HCT116 (cell line): ENCODE measurements at regions of chr18 and their contacts with region 1.

Region 1: GRCh38 chr18:50356036-50356945 is 18.6 kb upstream of the SKA1 start:
- DNase-seq: peak; percentile 28
- ATAC-seq: peak; percentile 83
- H3K4me3 ChIP-seq: no peak overlapping the region
- H3K27ac ChIP-seq: peak overlapping the region; percentile 29
- H3K4me1 ChIP-seq: peaks cover 14 to 15% of the 10 kb centered on the region in 2 experiments
- H3K27me3 ChIP-seq: no peaks in the 10 kb centered on the region
- CTCF ChIP-seq: peak in 2 of 3 experiments; percentile 35 to 36; a peak in 2 of 6 replicates
- POLR2A ChIP-seq: no peak
- RAD21 ChIP-seq: no peak; the same call in 1 of the 2 replicates

Region 2: DNA sequence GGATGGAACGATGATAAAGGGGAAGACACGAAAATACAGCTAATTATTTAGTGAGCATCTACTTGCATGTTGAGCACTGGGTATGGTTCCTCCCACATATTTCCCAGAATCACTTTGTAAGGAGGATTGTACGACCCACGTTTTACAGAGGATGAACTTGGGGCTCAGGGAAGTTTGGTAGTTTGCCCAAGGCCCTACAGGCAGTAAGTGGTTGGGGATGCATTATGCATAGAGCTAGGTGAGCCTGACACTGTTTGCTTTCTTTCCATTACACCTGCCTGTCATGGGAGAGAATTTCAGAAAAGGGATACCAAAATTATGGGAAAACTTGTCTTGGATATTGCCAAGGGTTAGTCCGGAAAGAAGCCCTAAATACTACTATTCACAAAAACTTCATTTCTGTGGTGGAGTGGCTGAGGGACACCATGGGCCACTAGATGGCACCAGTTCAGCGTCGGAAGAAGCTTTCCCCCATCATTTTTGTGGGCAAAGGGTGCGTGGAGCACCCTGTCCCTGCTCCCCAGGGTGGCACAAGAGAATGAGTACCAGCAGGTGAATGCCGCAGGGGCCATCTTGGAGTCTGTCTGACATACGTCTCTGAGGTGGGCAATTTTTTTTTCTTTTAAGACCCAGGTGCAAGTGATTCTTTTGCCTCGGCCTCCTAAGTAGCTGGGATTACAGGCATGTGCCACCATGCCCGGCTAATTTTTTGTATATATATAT is 845.7 kb before region 1 on chr18:
- CTCF ChIA-PET with region 1: no interaction called
- POLR2A ChIA-PET with region 1: no interaction called
- RAD21 ChIA-PET with region 1: no interaction called
- intact Hi-C with region 1: loop called (anchors 10 kb)
- DNase-seq: peak; percentile 73
- ATAC-seq: peak; percentile 97
- H3K4me3 ChIP-seq: no peak overlapping the region
- H3K27ac ChIP-seq: no peak overlapping the region
- H3K4me1 ChIP-seq: no peaks in the 10 kb centered on the region
- H3K27me3 ChIP-seq: no peaks in the 10 kb centered on the region
- CTCF ChIP-seq: peak; percentile 87 to 93 (median 88)
- POLR2A ChIP-seq: no peak
- RAD21 ChIP-seq: peak; percentile 97

Region 3: GRCh38 chr18:49886891-49887764 is 469.2 kb before region 1 on chr18:
- CTCF ChIA-PET with region 1: no interaction called
- POLR2A ChIA-PET with region 1: no interaction called
- RAD21 ChIA-PET with region 1: no interaction called
- intact Hi-C with region 1: loop called (anchors 10 kb)
- DNase-seq: peak; percentile 12
- ATAC-seq: peak; percentile 75
- H3K4me3 ChIP-seq: no peak overlapping the region
- H3K27ac ChIP-seq: no peak overlapping the region
- H3K4me1 ChIP-seq: peaks cover 9 to 11% of the 10 kb centered on the region in 2 experiments
- H3K27me3 ChIP-seq: no peaks in the 10 kb centered on the region
- CTCF ChIP-seq: peak in 2 of 3 experiments; percentile 44 to 53; a peak in 4 of 6 replicates
- POLR2A ChIP-seq: no peak
- RAD21 ChIP-seq: peak; percentile 21; the same call in 1 of the 2 replicates

Region 4: DNA sequence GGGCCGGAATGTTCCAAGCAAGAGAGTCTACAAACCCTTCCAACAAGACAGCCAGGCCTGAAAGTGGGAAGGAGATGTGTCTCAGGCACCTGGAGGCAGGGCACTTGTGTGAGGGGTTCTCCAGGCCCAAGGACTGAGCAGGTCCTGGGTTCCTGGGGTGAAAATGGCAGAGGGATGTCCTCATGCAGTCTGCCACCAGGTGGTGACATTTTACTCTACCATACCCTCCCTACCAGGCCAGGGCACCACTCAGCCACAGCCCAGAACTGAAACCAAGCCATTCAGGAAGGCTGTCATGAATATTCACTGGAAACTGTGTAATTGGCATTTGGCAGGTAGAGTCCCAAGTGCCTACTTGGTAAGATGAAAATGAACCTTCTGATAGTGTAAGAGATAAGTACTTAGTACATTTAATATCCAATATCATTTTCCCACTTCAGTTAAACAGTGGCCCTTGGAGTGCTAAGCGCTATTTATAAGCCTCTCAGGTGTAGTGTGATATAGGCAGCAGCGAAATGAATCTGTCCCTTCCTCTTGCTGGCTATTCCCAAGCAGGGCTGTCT is 346.4 kb before region 1 on chr18:
- CTCF ChIA-PET with region 1: interaction called, 3 read pairs
- POLR2A ChIA-PET with region 1: no interaction called
- RAD21 ChIA-PET with region 1: no interaction called
- intact Hi-C with region 1: loop called (anchors 1 kb)
- DNase-seq: peak; percentile 52
- ATAC-seq: peak; percentile 100
- H3K4me3 ChIP-seq: no peak overlapping the region
- H3K27ac ChIP-seq: no peak overlapping the region
- H3K4me1 ChIP-seq: peaks cover 0 to 20% of the 10 kb centered on the region in 2 experiments; a peak in 1 of 4 replicates
- H3K27me3 ChIP-seq: no peaks in the 10 kb centered on the region
- CTCF ChIP-seq: peak; percentile 71 to 77 (median 76)
- POLR2A ChIP-seq: no peak
- RAD21 ChIP-seq: peak; percentile 81

Region 5: GRCh38 chr18:50194631-50195532 is 161.4 kb before region 1 on chr18 and contains the start of gene MYO5B:
- CTCF ChIA-PET with region 1: interaction called, 10 read pairs
- POLR2A ChIA-PET with region 1: no interaction called
- RAD21 ChIA-PET with region 1: no interaction called
- intact Hi-C with region 1: no loop called
- DNase-seq: peak; percentile 42
- ATAC-seq: peak; percentile 94
- H3K4me3 ChIP-seq: peak within 1 kb of the TSS; percentile 65 to 71
- H3K27ac ChIP-seq: peak within 1 kb of the TSS; percentile 55; the same call in 1 of the 2 replicates
- H3K4me1 ChIP-seq: peaks cover 6 to 21% of the 10 kb centered on the region in 2 experiments; a peak in 1 of 4 replicates
- H3K27me3 ChIP-seq: no peaks in the 10 kb centered on the region
- CTCF ChIP-seq: peak in 2 of 3 experiments; percentile 32 to 45; a peak in 3 of 6 replicates
- POLR2A ChIP-seq: no peak
- RAD21 ChIP-seq: peak; percentile 50
- total RNA-seq, gene MYO5B: 32.1 TPM

Region 6: GRCh38 chr18:50218432-50219197 is 137.7 kb before region 1 on chr18:
- CTCF ChIA-PET with region 1: interaction called, 80 read pairs
- POLR2A ChIA-PET with region 1: interaction called, 7 read pairs
- RAD21 ChIA-PET with region 1: interaction called, 5 to 12 read pairs
- intact Hi-C with region 1: loop called (anchors 1 kb)
- DNase-seq: peak; percentile 33
- ATAC-seq: peak; percentile 97
- H3K4me3 ChIP-seq: no peak overlapping the region
- H3K27ac ChIP-seq: no peak overlapping the region
- H3K4me1 ChIP-seq: no peaks in the 10 kb centered on the region
- H3K27me3 ChIP-seq: no peaks in the 10 kb centered on the region
- CTCF ChIP-seq: peak; percentile 55 to 67 (median 66)
- POLR2A ChIP-seq: no peak
- RAD21 ChIP-seq: peak; percentile 68

Region 7: GRCh38 chr18:50287441-50288347 is 68.6 kb before region 1 on chr18 and contains the start of gene CXXC1:
- CTCF ChIA-PET with region 1: interaction called, 4 read pairs
- POLR2A ChIA-PET with region 1: no interaction called
- RAD21 ChIA-PET with region 1: no interaction called
- intact Hi-C with region 1: loop called (anchors 5 kb)
- DNase-seq: peak; percentile 99
- ATAC-seq: peak; percentile 88
- H3K4me3 ChIP-seq: peak within 1 kb of the TSS; percentile 83 to 97
- H3K27ac ChIP-seq: peak within 1 kb of the TSS; percentile 48
- H3K4me1 ChIP-seq: peaks cover 5 to 25% of the 10 kb centered on the region in 2 experiments; a peak in 3 of 4 replicates
- H3K27me3 ChIP-seq: no peaks in the 10 kb centered on the region
- CTCF ChIP-seq: peak in 1 of 3 experiments; percentile 43; a peak in 1 of 6 replicates
- POLR2A ChIP-seq: no peak
- RAD21 ChIP-seq: no peak
- total RNA-seq, gene CXXC1: 101 TPM

Region 8: GRCh38 chr18:50297621-50298442 is 58.5 kb before region 1 on chr18:
- CTCF ChIA-PET with region 1: no interaction called
- POLR2A ChIA-PET with region 1: no interaction called
- RAD21 ChIA-PET with region 1: no interaction called
- intact Hi-C with region 1: no loop called
- DNase-seq: no peak
- ATAC-seq: no peak
- H3K4me3 ChIP-seq: no peak overlapping the region
- H3K27ac ChIP-seq: no peak overlapping the region
- H3K4me1 ChIP-seq: no peaks in the 10 kb centered on the region
- H3K27me3 ChIP-seq: no peaks in the 10 kb centered on the region
- CTCF ChIP-seq: no peak
- POLR2A ChIP-seq: no peak
- RAD21 ChIP-seq: no peak